Naive thymus-derived CD4-positive, alpha-beta T cell (primary cell): ENCODE measurements at regions of chr6 and their contacts with region 1.

Region 1: DNA sequence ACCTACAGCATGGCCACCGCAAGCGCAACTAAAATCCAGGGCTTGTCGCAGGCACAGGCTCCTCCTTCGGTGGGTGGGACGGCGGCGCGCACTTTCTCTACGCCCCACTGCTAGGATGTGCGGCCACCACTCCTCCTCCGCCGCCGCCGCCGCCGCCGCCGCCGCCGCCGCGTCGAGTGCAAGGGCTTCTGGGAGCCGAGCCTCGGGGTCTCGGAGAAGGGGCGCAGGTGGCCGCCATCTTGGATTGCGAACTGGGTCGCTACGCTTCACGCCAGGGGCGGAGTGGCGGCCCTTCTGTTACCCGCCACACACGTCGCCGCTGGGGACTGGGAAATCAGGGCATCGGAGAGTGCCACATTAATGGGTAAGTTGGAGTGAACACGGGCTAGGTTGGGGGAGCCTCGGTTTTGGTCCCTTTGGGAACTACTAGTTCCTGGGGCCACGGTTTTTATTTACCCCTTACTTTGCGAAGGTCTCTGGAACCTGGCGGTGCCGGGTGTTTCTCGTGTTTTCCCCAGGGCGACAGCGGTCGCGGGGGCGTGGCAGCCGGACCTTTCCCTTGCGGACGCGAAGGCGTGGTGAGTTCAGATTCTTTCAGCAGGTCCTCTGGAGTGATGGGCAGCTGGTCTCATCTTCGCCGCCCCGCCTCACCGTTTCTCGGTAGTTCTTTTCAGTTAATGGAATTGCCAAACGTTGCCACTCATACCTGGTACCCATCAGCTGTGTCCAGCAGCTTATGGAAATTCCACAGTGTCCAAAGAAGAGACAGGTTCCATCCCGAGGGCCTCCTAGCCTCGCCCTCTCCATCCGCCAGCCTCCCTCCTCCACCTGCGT is at the start of gene KPNA5:
- DNase-seq: peak; percentile 82 to 91 (median 89)
- ATAC-seq: peak; percentile 97
- H3K4me3 ChIP-seq: peak within 1 kb of the TSS; percentile 88
- H3K4me3 Mint-ChIP-seq: peak within 1 kb of the TSS; percentile 94 to 99 (median 98)
- H3K27ac ChIP-seq: peak within 1 kb of the TSS; percentile 85
- H3K27ac Mint-ChIP-seq: peak within 1 kb of the TSS; percentile 96 to 99 (median 97)
- H3K4me1 ChIP-seq: peaks cover 0 to 13% of the 10 kb centered on the region in 2 donors
- H3K4me1 Mint-ChIP-seq: peaks cover 19 to 71% (median 46%) of the 10 kb centered on the region in 7 donors
- H3K27me3 ChIP-seq: no peaks in the 10 kb centered on the region
- H3K27me3 Mint-ChIP-seq: no peaks in the 10 kb centered on the region
- total RNA-seq, gene KPNA5: 11.0 to 78.2 (median 53.2) TPM

Region 2: GRCh38 chr6:116279260-116280063 is 401.7 kb before region 1 on chr6 and contains the start of gene TSPYL1:
- CTCF ChIA-PET with region 1: no interaction called
- POLR2A ChIA-PET with region 1: interaction called, 14 read pairs
- intact Hi-C with region 1: loop called (anchors 1 kb)
- DNase-seq: peak; percentile 85 to 98 (median 96)
- ATAC-seq: peak; percentile 92
- H3K4me3 ChIP-seq: peak within 1 kb of the TSS; percentile 86
- H3K4me3 Mint-ChIP-seq: peak within 1 kb of the TSS; percentile 96 to 100 (median 98)
- H3K27ac ChIP-seq: peak within 1 kb of the TSS; percentile 99
- H3K27ac Mint-ChIP-seq: peak within 1 kb of the TSS; percentile 98 to 100 (median 100)
- H3K4me1 ChIP-seq: peaks cover 39 to 43% of the 10 kb centered on the region in 2 donors
- H3K4me1 Mint-ChIP-seq: peaks cover 37 to 73% (median 54%) of the 10 kb centered on the region in 7 donors
- H3K27me3 ChIP-seq: no peaks in the 10 kb centered on the region
- H3K27me3 Mint-ChIP-seq: peaks cover 0 to 6% (median 0%) of the 10 kb centered on the region in 5 donors
- total RNA-seq, gene TSPYL1: 42.8 to 226 (median 104) TPM

Region 3: DNA sequence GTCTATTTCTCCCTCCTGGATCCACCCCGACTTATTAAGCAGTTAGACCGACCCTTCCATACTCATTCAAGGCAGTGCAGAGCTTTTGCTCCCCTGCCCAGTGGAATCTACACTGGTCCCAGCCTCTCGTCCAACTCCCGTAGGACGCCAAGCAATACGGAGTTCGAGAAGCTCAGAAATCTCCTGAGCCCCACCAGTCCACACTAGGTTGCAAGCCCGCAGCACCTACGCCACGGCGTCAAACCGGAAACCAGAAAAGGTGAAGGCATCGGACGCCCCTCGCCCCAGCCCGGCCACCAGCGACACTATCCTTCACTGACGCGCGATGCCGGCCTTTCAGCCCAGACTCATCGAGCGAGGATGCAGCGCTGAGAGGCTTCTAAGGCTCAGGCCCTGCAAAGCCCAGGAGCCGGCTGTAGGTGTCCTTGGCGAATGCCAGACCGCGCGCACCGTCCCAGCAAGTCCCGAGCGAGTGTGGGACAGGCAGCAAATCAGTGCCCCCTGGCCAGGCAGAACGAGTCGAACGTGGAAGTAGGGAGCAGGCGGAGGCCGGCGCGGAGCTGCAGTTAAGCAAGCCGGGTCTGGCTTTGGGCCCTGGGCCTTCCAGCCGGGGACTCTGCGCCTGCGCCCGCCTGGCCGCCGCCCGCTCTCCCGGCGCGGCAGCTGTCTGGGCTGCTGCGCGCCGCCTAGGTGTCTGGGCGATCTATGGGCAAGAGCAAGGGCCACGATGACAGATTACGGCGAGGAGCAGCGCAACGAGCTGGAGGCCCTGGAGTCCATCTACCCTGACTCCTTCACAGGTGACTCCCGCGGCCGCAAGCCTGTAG is 110.1 kb before region 1 on chr6 and contains the start of gene RWDD1:
- CTCF ChIA-PET with region 1: interaction called, 6 read pairs
- POLR2A ChIA-PET with region 1: interaction called, 20 read pairs
- intact Hi-C with region 1: loop called (anchors 1 kb)
- DNase-seq: peak; percentile 91 to 99 (median 98)
- ATAC-seq: peak; percentile 98
- H3K4me3 ChIP-seq: peak within 1 kb of the TSS; percentile 86
- H3K4me3 Mint-ChIP-seq: peak within 1 kb of the TSS; percentile 94 to 99 (median 98)
- H3K27ac ChIP-seq: peak within 1 kb of the TSS; percentile 95
- H3K27ac Mint-ChIP-seq: peak within 1 kb of the TSS; percentile 96 to 100 (median 99)
- H3K4me1 ChIP-seq: peaks cover 16 to 21% of the 10 kb centered on the region in 2 donors
- H3K4me1 Mint-ChIP-seq: peaks cover 33 to 62% (median 55%) of the 10 kb centered on the region in 7 donors
- H3K27me3 ChIP-seq: no peaks in the 10 kb centered on the region
- H3K27me3 Mint-ChIP-seq: peaks cover 0 to 11% (median 0%) of the 10 kb centered on the region in 5 donors
- total RNA-seq, gene RWDD1: 33.2 to 39.9 (median 36.7) TPM

Region 4: GRCh38 chr6:116667623-116668022 is 13.6 kb before region 1 on chr6:
- CTCF ChIA-PET with region 1: no interaction called
- POLR2A ChIA-PET with region 1: interaction called, 44 read pairs
- intact Hi-C with region 1: loop called (anchors 1 kb)
- DNase-seq: no peak
- ATAC-seq: no peak
- H3K4me3 ChIP-seq: peak overlapping the region; percentile 92
- H3K4me3 Mint-ChIP-seq: peak overlapping the region; percentile 90 to 100 (median 98)
- H3K27ac ChIP-seq: peak overlapping the region; percentile 91
- H3K27ac Mint-ChIP-seq: peak overlapping the region; percentile 44 to 100 (median 98)
- H3K4me1 ChIP-seq: peaks cover 17 to 24% of the 10 kb centered on the region in 2 donors
- H3K4me1 Mint-ChIP-seq: peaks cover 29 to 55% (median 45%) of the 10 kb centered on the region in 7 donors
- H3K27me3 ChIP-seq: no peaks in the 10 kb centered on the region
- H3K27me3 Mint-ChIP-seq: peaks cover 0 to 15% (median 0%) of the 10 kb centered on the region in 5 donors

Region 5: DNA sequence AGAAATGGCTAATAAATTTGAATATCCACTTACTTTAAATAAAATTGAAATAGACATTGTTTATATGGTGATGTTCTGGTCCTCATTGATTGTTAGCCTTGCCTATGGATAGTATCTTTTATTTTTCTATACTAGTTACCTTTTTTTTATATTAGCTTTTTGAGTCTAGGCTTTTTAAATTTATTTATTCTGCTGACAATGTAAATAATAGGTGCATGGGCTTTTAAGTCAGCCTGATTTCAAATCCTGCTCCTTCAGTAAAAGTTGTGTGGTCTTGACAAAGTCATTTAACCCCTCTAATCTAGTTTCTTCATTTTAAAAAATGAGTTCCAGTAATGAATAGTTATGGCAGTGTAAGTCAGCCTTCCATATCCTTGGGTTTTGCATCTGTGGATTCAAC is 45.8 kb after region 1 on chr6:
- CTCF ChIA-PET with region 1: no interaction called
- POLR2A ChIA-PET with region 1: interaction called, 3 read pairs
- intact Hi-C with region 1: loop called in 1 of 2 experiments (anchors 5 kb)
- DNase-seq: no peak
- ATAC-seq: no peak
- H3K4me3 ChIP-seq: no peak overlapping the region
- H3K4me3 Mint-ChIP-seq: no peak overlapping the region
- H3K27ac ChIP-seq: no peak overlapping the region
- H3K27ac Mint-ChIP-seq: peak overlapping the region in 1 of 9 donors; percentile 58
- H3K4me1 ChIP-seq: no peaks in the 10 kb centered on the region
- H3K4me1 Mint-ChIP-seq: peaks cover 0 to 2% (median 0%) of the 10 kb centered on the region in 7 donors
- H3K27me3 ChIP-seq: no peaks in the 10 kb centered on the region
- H3K27me3 Mint-ChIP-seq: no peaks in the 10 kb centered on the region

Region 6: GRCh38 chr6:116866281-116866871 is 185.2 kb after region 1 on chr6:
- CTCF ChIA-PET with region 1: no interaction called
- POLR2A ChIA-PET with region 1: no interaction called
- intact Hi-C with region 1: no loop called
- DNase-seq: no peak
- ATAC-seq: no peak
- H3K4me3 ChIP-seq: no peak overlapping the region
- H3K4me3 Mint-ChIP-seq: no peak overlapping the region
- H3K27ac ChIP-seq: no peak overlapping the region
- H3K27ac Mint-ChIP-seq: no peak overlapping the region
- H3K4me1 ChIP-seq: no peaks in the 10 kb centered on the region
- H3K4me1 Mint-ChIP-seq: no peaks in the 10 kb centered on the region
- H3K27me3 ChIP-seq: no peaks in the 10 kb centered on the region
- H3K27me3 Mint-ChIP-seq: peaks cover 0 to 8% (median 0%) of the 10 kb centered on the region in 5 donors

Region 7: DNA sequence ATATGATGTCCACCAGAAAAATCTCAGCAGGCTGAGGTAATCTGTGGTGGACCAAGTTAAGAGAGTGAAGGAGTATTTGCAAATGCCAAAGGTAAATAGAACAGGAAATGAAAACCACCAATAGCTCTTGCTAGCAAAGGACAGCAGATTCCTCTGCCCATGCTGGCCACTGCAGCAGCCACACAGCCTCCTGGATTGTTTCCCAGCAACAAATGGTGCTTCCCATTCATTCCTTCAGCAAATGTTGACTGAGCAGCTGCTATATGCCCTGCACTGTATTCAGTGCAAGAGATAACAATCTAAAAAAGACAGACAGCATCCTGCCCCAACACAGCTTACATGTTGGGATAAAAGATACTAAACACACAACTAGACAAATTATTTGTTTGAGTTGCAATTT is 733.6 kb after region 1 on chr6:
- CTCF ChIA-PET with region 1: no interaction called
- POLR2A ChIA-PET with region 1: no interaction called
- intact Hi-C with region 1: no loop called
- DNase-seq: no peak
- ATAC-seq: no peak
- H3K4me3 ChIP-seq: no peak overlapping the region
- H3K4me3 Mint-ChIP-seq: no peak overlapping the region
- H3K27ac ChIP-seq: no peak overlapping the region
- H3K27ac Mint-ChIP-seq: no peak overlapping the region
- H3K4me1 ChIP-seq: no peaks in the 10 kb centered on the region
- H3K4me1 Mint-ChIP-seq: no peaks in the 10 kb centered on the region
- H3K27me3 ChIP-seq: peaks cover 0 to 4% of the 10 kb centered on the region in 2 donors
- H3K27me3 Mint-ChIP-seq: peaks cover 3 to 28% (median 22%) of the 10 kb centered on the region in 5 donors